ENCODE measurements at regions of chr17 and their contacts with region 1.

Region 1: GRCh38 chr17:7740481-7741001 is 23.0 kb downstream of the DNAH2 start:
- DNase-seq: peak in 2 of 4 donors; percentile 3 to 14
- ATAC-seq: no peak
- H3K4me3 ChIP-seq: no peak overlapping the region
- H3K27ac ChIP-seq: no peak overlapping the region
- H3K4me1 ChIP-seq: no peaks in the 10 kb centered on the region
- H3K27me3 ChIP-seq: peaks cover 0 to 4% of the 10 kb centered on the region in 2 donors
- CTCF ChIP-seq: no peak
- POLR2A ChIP-seq: no peak

Region 2: GRCh38 chr17:7844292-7845154 is 104.0 kb after region 1 on chr17:
- intact Hi-C with region 1: loop called (anchors 5 kb)
- DNase-seq: peak; percentile 90 to 95 (median 92)
- ATAC-seq: peak; percentile 69
- H3K4me3 ChIP-seq: peak overlapping the region; percentile 38 to 88
- H3K27ac ChIP-seq: peak overlapping the region; percentile 95 to 100 (median 98)
- H3K4me1 ChIP-seq: peaks cover 39% of the 10 kb centered on the region
- H3K27me3 ChIP-seq: no peaks in the 10 kb centered on the region
- CTCF ChIP-seq: no peak
- POLR2A ChIP-seq: peak; percentile 63 to 83 (median 78)

Region 3: GRCh38 chr17:8057691-8058114 is 317.2 kb after region 1 on chr17:
- intact Hi-C with region 1: no loop called
- DNase-seq: peak; percentile 50 to 79 (median 69)
- ATAC-seq: peak; percentile 88
- H3K4me3 ChIP-seq: no peak overlapping the region
- H3K27ac ChIP-seq: no peak overlapping the region
- H3K4me1 ChIP-seq: peaks cover 24% of the 10 kb centered on the region
- H3K27me3 ChIP-seq: peaks cover 4 to 22% of the 10 kb centered on the region in 2 donors
- CTCF ChIP-seq: peak; percentile 57 to 91 (median 84)
- POLR2A ChIP-seq: no peak

Measured in body of pancreas (tissue), 4 donors.